Activated CD8-positive, alpha-beta memory T cell treated with anti-CD3 and anti-CD28 coated beads, Interleukin-2, amount 10 ng/mL, durations not matched to agents 7 days and 5 days (primary cell): ENCODE measurements at regions of chr11 and their contacts with region 1.

Region 1: DNA sequence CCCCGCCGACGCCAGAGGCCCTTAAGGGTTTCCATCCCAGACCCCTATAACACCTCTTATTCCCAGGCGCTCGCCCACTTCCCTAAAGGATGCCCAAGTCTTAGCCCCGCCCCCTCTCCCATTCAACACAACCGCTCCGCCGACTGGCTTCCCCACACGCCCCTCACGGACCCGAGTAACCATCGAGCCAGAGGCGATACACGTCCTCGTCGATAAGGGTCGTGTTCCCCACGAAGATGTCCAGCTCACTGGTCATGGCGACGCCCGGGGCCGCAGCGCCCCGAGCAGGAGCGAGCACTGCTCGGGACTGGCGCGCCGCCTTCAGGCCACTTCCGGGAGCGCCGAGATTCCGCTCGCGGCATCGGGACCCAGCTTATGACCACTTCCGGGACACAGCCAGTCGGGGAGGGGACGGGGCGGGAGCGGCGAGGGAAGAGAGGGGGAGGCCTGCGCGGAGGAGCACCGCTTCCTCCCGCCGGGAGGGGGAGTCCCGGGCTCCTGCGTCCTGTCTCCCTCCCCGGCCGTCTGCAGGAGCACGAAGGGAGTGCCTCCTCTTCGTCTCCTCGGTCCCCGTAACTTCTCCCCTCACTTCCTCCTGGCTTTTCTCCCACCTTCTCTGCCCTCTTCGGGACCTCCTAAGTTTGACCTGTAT is at the start of gene FIBP:
- DNase-seq: peak; percentile 98
- ATAC-seq: peak; percentile 63
- H3K4me3 Mint-ChIP-seq: peak within 1 kb of the TSS; percentile 96
- H3K27ac Mint-ChIP-seq: peak within 1 kb of the TSS; percentile 95
- H3K4me1 Mint-ChIP-seq: peaks cover 68% of the 10 kb centered on the region
- H3K27me3 Mint-ChIP-seq: no peaks in the 10 kb centered on the region
- total RNA-seq, gene FIBP: 100 to 122 TPM

Region 2: GRCh38 chr11:65779851-65780577 is 108.3 kb before region 1 on chr11:
- CTCF ChIA-PET with region 1: interaction called, 35 read pairs
- DNase-seq: peak; percentile 91
- ATAC-seq: peak; percentile 81
- H3K4me3 Mint-ChIP-seq: peak overlapping the region; percentile 87
- H3K27ac Mint-ChIP-seq: peak overlapping the region; percentile 82
- H3K4me1 Mint-ChIP-seq: peaks cover 16% of the 10 kb centered on the region
- H3K27me3 Mint-ChIP-seq: peaks cover 14% of the 10 kb centered on the region

Region 3: GRCh38 chr11:65826962-65827735 is 61.1 kb before region 1 on chr11:
- CTCF ChIA-PET with region 1: no interaction called
- DNase-seq: no peak
- ATAC-seq: no peak
- H3K4me3 Mint-ChIP-seq: no peak overlapping the region
- H3K27ac Mint-ChIP-seq: no peak overlapping the region
- H3K4me1 Mint-ChIP-seq: peaks cover 17% of the 10 kb centered on the region
- H3K27me3 Mint-ChIP-seq: peaks cover 19% of the 10 kb centered on the region

Region 4: DNA sequence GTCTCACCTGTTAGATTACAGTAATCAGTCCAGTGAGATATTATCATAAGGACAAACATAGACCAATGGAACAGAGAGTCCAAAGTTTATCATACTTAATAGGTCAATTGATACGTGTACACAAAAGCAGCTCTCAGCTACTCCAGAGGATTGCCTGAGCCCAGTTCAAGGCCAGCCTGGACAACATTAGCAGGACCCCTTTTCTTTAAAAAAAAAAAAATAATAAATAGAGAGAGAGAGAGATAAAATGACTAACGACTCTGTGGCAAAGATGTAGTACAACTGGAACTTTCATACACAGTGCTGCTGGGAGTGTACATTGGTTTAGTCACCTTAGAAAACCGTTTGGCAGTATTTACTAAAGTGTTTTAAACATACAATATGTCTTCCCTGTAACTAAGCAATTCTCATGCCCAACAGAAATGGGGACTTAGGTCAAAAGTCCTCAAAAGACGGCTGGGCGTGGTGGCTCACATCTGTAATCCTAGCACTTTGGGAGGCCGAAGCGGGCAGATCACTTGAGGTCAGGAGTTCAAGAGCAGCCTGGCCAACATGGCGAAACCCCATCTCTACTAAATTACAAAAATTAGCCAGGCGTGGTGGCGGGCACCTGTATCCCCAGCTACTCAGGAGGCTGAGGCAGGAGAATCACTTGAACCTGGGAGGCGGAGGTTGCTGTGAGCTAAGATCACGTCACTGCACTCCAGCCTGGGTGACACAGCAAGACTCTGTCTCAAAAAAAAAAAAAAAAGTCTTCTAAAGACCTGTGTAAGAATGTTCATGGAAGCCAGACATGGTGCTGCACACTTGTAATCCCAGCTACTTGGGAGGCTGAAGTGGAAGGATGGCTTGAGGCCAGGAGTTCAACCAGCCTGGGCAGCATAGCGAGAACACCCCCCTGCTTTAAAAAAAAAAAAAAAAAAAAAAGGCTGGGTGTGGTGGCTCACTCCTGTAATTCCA is 43.8 kb before region 1 on chr11:
- CTCF ChIA-PET with region 1: interaction called, 20 read pairs
- DNase-seq: no peak
- ATAC-seq: no peak
- H3K4me3 Mint-ChIP-seq: no peak overlapping the region
- H3K27ac Mint-ChIP-seq: no peak overlapping the region
- H3K4me1 Mint-ChIP-seq: no peaks in the 10 kb centered on the region
- H3K27me3 Mint-ChIP-seq: no peaks in the 10 kb centered on the region

Region 5: DNA sequence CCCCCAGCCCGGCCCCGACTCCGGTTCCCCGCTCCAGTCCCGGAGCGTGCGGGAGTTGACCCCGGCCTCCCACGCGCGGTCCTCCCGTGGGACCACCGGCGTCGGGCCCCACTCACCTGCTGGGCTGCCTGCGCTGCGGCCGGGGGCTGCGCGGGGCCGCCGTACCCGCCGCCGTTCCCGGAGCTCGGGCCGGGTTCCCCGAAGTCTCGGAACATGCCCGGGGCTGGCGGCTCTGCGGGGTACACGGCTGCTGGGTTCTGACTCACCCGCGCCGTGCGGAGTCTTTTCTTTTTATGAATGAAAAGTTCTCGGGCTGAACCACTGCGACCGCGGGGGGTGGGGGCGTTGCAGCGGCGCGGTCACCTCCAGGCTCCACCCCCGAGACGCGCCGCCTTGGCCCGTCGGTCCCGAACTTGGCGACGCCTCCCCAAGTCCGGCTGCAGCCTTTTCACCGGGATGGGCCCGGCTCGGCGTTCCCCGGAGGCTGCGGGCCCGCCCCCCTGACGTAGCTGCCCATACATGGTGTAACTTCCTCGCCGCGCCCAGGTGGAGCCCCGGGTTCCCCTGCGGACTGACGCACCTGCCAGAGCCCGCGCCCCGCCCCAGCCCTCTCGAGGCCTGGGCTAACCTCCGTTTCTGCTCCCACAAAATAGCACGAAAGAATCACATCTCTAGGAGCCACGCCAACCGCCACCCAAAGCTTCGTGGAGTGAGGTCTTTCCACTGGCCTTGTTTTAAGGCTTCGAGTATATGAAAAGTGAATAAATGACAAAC is 12.0 kb after region 1 on chr11 and contains the start of gene FOSL1:
- CTCF ChIA-PET with region 1: interaction called, 197 read pairs
- DNase-seq: peak; percentile 93
- ATAC-seq: peak; percentile 84
- H3K4me3 Mint-ChIP-seq: peak within 1 kb of the TSS; percentile 72
- H3K27ac Mint-ChIP-seq: peak within 1 kb of the TSS; percentile 70
- H3K4me1 Mint-ChIP-seq: peaks cover 56% of the 10 kb centered on the region
- H3K27me3 Mint-ChIP-seq: peaks cover 3% of the 10 kb centered on the region
- total RNA-seq, gene FOSL1: 2.7 to 6.0 TPM

Region 6: GRCh38 chr11:65919146-65920033 is 31.1 kb after region 1 on chr11 and contains the start of gene DRAP1:
- CTCF ChIA-PET with region 1: interaction called, 26 read pairs
- DNase-seq: peak; percentile 99
- ATAC-seq: peak; percentile 93
- H3K4me3 Mint-ChIP-seq: peak within 1 kb of the TSS; percentile 94
- H3K27ac Mint-ChIP-seq: peak within 1 kb of the TSS; percentile 88
- H3K4me1 Mint-ChIP-seq: peaks cover 40% of the 10 kb centered on the region
- H3K27me3 Mint-ChIP-seq: no peaks in the 10 kb centered on the region
- total RNA-seq, gene DRAP1: 192 to 254 TPM

Region 7: GRCh38 chr11:65961232-65961901 is 73.1 kb after region 1 on chr11 and contains the start of gene SART1:
- CTCF ChIA-PET with region 1: interaction called, 23 read pairs
- DNase-seq: peak; percentile 99
- ATAC-seq: peak; percentile 95
- H3K4me3 Mint-ChIP-seq: peak within 1 kb of the TSS; percentile 90
- H3K27ac Mint-ChIP-seq: peak within 1 kb of the TSS; percentile 97
- H3K4me1 Mint-ChIP-seq: peaks cover 43% of the 10 kb centered on the region
- H3K27me3 Mint-ChIP-seq: no peaks in the 10 kb centered on the region
- total RNA-seq, gene SART1: 79.7 to 89.2 TPM

Region 8: GRCh38 chr11:66142370-66143263 is 254.3 kb after region 1 on chr11:
- CTCF ChIA-PET with region 1: no interaction called
- DNase-seq: no peak
- ATAC-seq: no peak
- H3K4me3 Mint-ChIP-seq: no peak overlapping the region
- H3K27ac Mint-ChIP-seq: no peak overlapping the region
- H3K4me1 Mint-ChIP-seq: peaks cover 9% of the 10 kb centered on the region
- H3K27me3 Mint-ChIP-seq: no peaks in the 10 kb centered on the region